ENCODE measurements at regions of chr16 and their contacts with region 1.

Region 1: GRCh38 chr16:50627419-50627818 is 53.7 kb downstream of the SNX20 start:
- DNase-seq: peak; percentile 51
- ATAC-seq: peak; percentile 72
- H3K4me3 Mint-ChIP-seq: peak overlapping the region; percentile 13
- H3K27ac Mint-ChIP-seq: peak overlapping the region; percentile 70
- H3K4me1 Mint-ChIP-seq: peaks cover 19% of the 10 kb centered on the region
- H3K27me3 Mint-ChIP-seq: no peaks in the 10 kb centered on the region

Region 2: DNA sequence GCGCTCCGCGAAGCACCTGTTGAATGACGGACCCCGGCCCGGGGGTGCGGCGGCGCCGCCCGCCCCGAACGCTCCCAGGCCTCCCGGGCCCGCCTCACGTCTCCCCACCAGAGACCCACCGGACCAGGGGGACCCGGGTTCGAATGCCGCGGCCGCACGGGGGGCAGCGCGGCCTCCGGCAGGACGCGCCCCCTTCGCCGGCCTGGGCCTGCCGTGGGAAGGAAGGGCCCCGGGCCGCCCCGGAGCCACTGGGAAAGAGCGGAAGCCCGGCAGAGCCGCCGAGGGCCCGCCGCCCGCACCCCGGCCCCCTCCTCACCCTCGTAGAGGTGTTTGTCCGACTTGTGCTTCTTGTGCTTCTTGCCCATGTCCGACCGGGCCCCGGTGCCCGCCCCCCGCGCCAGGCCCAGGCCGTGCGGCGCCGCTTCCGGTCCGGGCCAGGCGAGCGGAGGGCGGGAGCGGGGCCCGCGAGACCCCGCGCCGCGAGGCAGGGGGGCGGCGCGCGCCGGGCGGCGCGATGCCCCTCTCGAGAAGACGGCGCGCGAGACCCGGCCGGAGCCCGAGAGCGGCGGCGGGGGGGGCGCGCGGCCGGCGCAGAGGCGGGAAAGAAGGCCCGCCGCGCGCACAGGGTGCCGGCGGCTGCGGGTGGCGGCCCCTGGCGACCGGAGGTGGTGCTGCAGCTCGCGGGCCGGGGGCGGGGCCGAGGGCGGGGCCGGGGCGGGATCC is 258.8 kb before region 1 on chr16 and contains the start of gene BRD7:
- CTCF ChIA-PET with region 1: interaction called, 10 read pairs
- POLR2A ChIA-PET with region 1: no interaction called
- DNase-seq: peak; percentile 69
- ATAC-seq: peak; percentile 84
- H3K4me3 Mint-ChIP-seq: peak within 1 kb of the TSS; percentile 82
- H3K27ac Mint-ChIP-seq: peak within 1 kb of the TSS; percentile 93
- H3K4me1 Mint-ChIP-seq: peaks cover 41% of the 10 kb centered on the region
- H3K27me3 Mint-ChIP-seq: peaks cover 2% of the 10 kb centered on the region
- total RNA-seq, gene BRD7: 88.9 to 90.4 TPM

Region 3: GRCh38 chr16:50841081-50841886 is 213.9 kb after region 1 on chr16:
- CTCF ChIA-PET with region 1: no interaction called
- POLR2A ChIA-PET with region 1: no interaction called
- DNase-seq: peak; percentile 42
- ATAC-seq: peak; percentile 74
- H3K4me3 Mint-ChIP-seq: peak overlapping the region; percentile 50
- H3K27ac Mint-ChIP-seq: no peak overlapping the region
- H3K4me1 Mint-ChIP-seq: peaks cover 16% of the 10 kb centered on the region
- H3K27me3 Mint-ChIP-seq: peaks cover 34% of the 10 kb centered on the region